Right ventricle myocardium inferior (tissue), 1 donor: ENCODE measurements at regions of chr14 and their contacts with region 1.

Region 1: GRCh38 chr14:90758028-90758889 is 58.0 kb downstream of the TTC7B start:
- DNase-seq: peak; percentile 96
- ATAC-seq: peak; percentile 93

Region 2: GRCh38 chr14:90331497-90332435 is 426.5 kb before region 1 on chr14 and contains the start of gene NRDE2:
- intact Hi-C with region 1: loop called (anchors 2 kb)
- DNase-seq: peak; percentile 100
- ATAC-seq: peak; percentile 100
- total RNA-seq, gene NRDE2: 11.2 TPM

Region 3: GRCh38 chr14:90399541-90400444 is 358.5 kb before region 1 on chr14:
- intact Hi-C with region 1: loop called (anchors 2 kb)
- DNase-seq: peak; percentile 95
- ATAC-seq: peak; percentile 73

Region 4: GRCh38 chr14:90556012-90556477 is 202.2 kb before region 1 on chr14:
- intact Hi-C with region 1: no loop called
- DNase-seq: no peak
- ATAC-seq: peak; percentile 52

Region 5: DNA sequence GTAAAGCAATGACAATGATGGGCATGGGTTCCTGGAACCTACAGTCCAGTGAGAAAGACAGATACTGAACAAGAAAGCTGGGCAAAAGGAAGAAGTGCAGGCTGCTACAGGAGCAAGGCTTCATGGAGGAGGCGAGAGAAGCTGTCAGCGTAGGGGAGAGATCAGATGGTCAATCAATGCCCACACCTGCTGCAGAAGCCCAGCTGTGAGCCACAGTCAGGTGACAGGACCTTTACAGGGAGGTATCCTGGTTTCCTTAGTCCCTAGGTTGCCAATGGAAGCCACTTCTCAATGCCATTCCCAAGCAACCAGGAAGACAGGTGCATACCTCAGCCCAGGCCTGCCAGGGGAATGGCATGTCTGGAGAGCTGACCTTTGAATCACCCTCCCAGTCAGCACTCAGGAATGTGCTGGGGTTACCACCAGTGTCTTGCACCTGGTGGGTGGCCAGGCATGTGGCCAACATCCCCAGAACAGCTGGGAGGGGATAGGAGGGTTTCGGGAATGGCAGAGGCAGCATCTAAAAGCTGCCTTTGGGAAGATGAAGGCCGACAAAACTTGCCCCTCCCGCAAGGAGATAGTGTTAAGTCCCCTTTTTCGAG is 112.3 kb before region 1 on chr14:
- intact Hi-C with region 1: no loop called
- DNase-seq: no peak
- ATAC-seq: no peak

Region 6: DNA sequence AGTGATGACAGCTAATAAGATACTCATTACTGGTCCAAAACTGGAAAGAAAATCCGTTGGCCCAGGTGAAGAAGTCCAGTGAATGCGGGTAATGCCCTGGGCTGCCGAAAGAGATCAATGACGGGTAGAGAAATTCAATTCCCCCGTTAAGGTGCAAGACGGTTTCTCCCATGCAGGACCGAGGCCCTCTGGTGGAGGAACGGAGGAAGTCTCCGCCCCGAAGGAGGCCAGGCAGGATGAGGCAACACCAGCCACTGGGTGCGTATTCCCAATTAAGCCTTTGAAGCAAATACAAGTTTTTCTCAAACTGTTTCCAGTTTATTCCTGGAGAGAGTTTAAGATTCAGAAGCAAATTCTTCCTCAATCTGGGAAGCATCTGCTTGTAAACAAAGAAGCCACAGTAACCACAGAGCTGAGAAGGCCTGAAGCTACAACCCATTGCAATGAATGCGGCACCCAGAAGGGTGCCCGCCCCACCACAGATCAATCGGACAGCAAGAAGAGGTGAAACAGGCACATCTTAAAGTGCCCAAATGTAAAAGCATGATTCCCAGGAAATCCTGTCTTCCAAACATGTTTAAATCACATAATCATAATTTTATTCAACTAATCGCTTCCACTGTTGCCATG is 60.6 kb before region 1 on chr14:
- intact Hi-C with region 1: loop called (anchors 2 kb)
- DNase-seq: peak; percentile 91
- ATAC-seq: peak; percentile 92

Region 7: GRCh38 chr14:90805662-90806540 is 47.6 kb after region 1 on chr14:
- intact Hi-C with region 1: loop called (anchors 5 kb)
- DNase-seq: no peak
- ATAC-seq: peak; percentile 64